HepG2 (cell line): ENCODE measurements at regions of chr19 and their contacts with region 1.

Region 1: GRCh38 chr19:6372594-6373095 is at the start of gene ALKBH7:
- DNase-seq: peak; percentile 99
- ATAC-seq: peak; percentile 91
- H3K4me3 ChIP-seq: peak within 1 kb of the TSS; percentile 88 to 98 (median 89)
- H3K27ac ChIP-seq: peak within 1 kb of the TSS; percentile 100
- H3K4me1 ChIP-seq: peaks cover 14% of the 10 kb centered on the region
- H3K27me3 ChIP-seq: no peaks in the 10 kb centered on the region
- CTCF ChIP-seq: no peak; the same call in 1 of the 2 replicates
- EP300 ChIP-seq: no peak
- POLR2A ChIP-seq: peak; percentile 62 to 63
- RAD21 ChIP-seq: peak; percentile 41; the same call in 1 of the 2 replicates
- total RNA-seq, gene ALKBH7: 45.9 and 48.3 TPM in 2 replicates

Region 2: GRCh38 chr19:6362027-6362350 is 10.7 kb before region 1 on chr19:
- CTCF ChIA-PET with region 1: no interaction called
- POLR2A ChIA-PET with region 1: interaction called, 80 read pairs
- in situ Hi-C with region 1: no loop called
- intact Hi-C with region 1: no loop called
- DNase-seq: no peak
- ATAC-seq: no peak
- H3K4me3 ChIP-seq: peak overlapping the region; percentile 63 to 84 (median 84)
- H3K27ac ChIP-seq: peak overlapping the region; percentile 49
- H3K4me1 ChIP-seq: peaks cover 27% of the 10 kb centered on the region
- H3K27me3 ChIP-seq: no peaks in the 10 kb centered on the region; a peak in 1 of 5 replicates
- CTCF ChIP-seq: no peak
- EP300 ChIP-seq: no peak
- POLR2A ChIP-seq: no peak
- RAD21 ChIP-seq: no peak

Region 3: GRCh38 chr19:6393074-6393983 is 20.7 kb after region 1 on chr19 and contains the start of gene GTF2F1:
- CTCF ChIA-PET with region 1: no interaction called
- POLR2A ChIA-PET with region 1: interaction called, 45 read pairs
- in situ Hi-C with region 1: no loop called
- intact Hi-C with region 1: no loop called
- DNase-seq: peak; percentile 89
- ATAC-seq: peak; percentile 92
- H3K4me3 ChIP-seq: peak within 1 kb of the TSS; percentile 81 to 99 (median 92)
- H3K27ac ChIP-seq: peak within 1 kb of the TSS; percentile 65
- H3K4me1 ChIP-seq: peaks cover 24% of the 10 kb centered on the region
- H3K27me3 ChIP-seq: no peaks in the 10 kb centered on the region; a peak in 1 of 5 replicates
- CTCF ChIP-seq: peak; percentile 54
- EP300 ChIP-seq: no peak
- POLR2A ChIP-seq: peak; percentile 52 to 70; a peak in 3 of 4 replicates
- RAD21 ChIP-seq: peak; percentile 63; the same call in 1 of the 2 replicates
- total RNA-seq, gene GTF2F1: 30.7 and 34.1 TPM in 2 replicates

Region 4: DNA sequence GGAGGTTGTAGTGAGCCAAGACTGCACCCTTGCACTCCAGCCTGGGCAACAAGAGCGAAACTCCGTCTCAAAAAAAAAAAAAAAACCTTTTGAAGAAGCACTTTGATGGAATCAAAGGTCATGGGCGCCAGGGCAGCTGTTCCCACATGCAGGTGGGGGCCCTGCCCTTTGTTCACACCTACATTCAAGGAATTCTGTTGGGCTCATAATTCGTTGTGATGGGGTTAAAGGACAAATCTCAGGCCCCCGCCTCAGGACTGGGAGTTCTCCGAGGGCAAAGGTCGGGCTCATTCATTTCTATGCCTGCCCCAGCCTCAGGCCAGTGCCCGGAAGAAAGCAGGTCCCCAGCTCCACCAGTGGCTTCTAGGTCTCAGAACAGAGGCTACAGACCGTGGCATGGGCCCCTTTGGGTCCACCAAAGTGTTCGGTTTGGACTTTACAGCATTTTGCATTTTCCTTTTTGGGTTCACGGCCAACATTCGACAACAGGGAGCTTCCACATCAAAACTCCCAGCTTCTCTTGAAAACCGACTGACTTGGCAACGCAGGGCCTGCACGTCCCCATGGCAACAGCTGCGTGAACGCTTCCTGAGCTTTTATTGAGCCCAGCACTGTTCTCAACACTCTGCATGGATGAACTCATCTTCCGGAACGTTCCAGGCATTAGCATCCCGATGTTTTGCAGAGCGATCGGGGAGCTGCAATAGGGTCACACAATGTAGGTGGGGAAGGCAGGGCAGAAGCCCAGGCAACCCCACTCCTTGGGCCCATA is 30.4 kb after region 1 on chr19:
- CTCF ChIA-PET with region 1: no interaction called
- POLR2A ChIA-PET with region 1: interaction called, 17 read pairs
- in situ Hi-C with region 1: no loop called
- intact Hi-C with region 1: no loop called
- DNase-seq: peak; percentile 58
- ATAC-seq: peak; percentile 87
- H3K4me3 ChIP-seq: peak overlapping the region; percentile 19 to 50 (median 21)
- H3K27ac ChIP-seq: peak overlapping the region; percentile 48
- H3K4me1 ChIP-seq: peaks cover 18% of the 10 kb centered on the region
- H3K27me3 ChIP-seq: no peaks in the 10 kb centered on the region
- CTCF ChIP-seq: no peak
- EP300 ChIP-seq: peak in 1 of 2 experiments; percentile 51; a peak in 1 of 4 replicates
- POLR2A ChIP-seq: no peak
- RAD21 ChIP-seq: no peak

Region 5: DNA sequence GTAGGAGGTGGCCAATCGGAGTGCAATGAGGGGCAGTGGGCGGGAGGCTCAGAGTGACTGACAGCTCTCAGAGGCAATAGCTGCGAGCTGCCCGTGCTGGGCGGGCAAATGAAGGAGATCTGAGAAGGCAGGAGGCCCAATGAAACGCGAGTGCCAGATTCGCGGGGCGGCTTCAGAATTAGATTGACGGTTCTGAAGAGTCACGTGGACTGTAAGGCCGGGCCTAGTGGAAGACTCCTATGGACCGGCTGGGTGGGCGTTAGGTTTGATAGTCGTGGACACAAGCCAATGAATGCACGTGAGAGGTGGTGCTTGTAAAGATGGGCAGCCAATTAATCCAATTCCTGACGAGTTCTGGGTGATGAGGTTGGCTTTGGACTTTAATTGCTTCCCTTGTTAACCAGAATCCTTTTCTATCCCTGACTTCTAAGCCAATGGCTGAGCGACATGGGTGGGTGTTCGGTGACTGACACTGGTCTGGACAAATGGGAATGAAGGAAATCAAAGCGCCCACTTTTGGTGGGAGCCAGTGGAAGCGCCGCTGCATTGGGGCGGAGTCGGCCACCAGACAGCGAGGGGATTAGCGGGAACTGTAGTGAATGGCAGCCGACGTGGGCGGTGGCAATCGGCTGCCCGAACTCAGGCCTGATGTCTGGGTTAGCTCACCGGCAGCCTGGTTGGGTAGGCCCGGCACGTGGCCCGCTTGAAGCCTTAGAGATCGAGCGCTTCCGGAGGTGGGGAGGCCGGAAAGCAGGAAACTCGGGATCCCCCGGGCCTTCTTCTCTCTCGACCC is 52.5 kb after region 1 on chr19:
- CTCF ChIA-PET with region 1: no interaction called
- POLR2A ChIA-PET with region 1: interaction called, 29 read pairs
- in situ Hi-C with region 1: no loop called
- intact Hi-C with region 1: no loop called
- DNase-seq: peak; percentile 100
- ATAC-seq: peak; percentile 93
- H3K4me3 ChIP-seq: peak overlapping the region in 1 of 3 experiments; percentile 18; a peak in 1 of 6 replicates
- H3K27ac ChIP-seq: peak overlapping the region; percentile 62
- H3K4me1 ChIP-seq: peaks cover 33% of the 10 kb centered on the region
- H3K27me3 ChIP-seq: no peaks in the 10 kb centered on the region; a peak in 1 of 5 replicates
- CTCF ChIP-seq: 0 out of 2 replicates have a peak, but pooled peaks have one; percentile 3
- EP300 ChIP-seq: no peak
- POLR2A ChIP-seq: no peak
- RAD21 ChIP-seq: peak; percentile 37; the same call in 1 of the 2 replicates